Right ventricle myocardium inferior (tissue), 1 donor: ENCODE measurements at regions of chr12 and their contacts with region 1.

Region 1: GRCh38 chr12:57520053-57520871 is at the start of gene DDIT3:
- DNase-seq: peak; percentile 100
- ATAC-seq: peak; percentile 88
- total RNA-seq, gene DDIT3: 19.2 TPM

Region 2: GRCh38 chr12:57276935-57277563 is 243.2 kb before region 1 on chr12:
- intact Hi-C with region 1: no loop called
- DNase-seq: no peak
- ATAC-seq: no peak

Region 3: GRCh38 chr12:57462251-57462911 is 57.9 kb before region 1 on chr12:
- intact Hi-C with region 1: loop called (anchors 1 kb)
- DNase-seq: peak; percentile 90
- ATAC-seq: peak; percentile 76

Region 4: DNA sequence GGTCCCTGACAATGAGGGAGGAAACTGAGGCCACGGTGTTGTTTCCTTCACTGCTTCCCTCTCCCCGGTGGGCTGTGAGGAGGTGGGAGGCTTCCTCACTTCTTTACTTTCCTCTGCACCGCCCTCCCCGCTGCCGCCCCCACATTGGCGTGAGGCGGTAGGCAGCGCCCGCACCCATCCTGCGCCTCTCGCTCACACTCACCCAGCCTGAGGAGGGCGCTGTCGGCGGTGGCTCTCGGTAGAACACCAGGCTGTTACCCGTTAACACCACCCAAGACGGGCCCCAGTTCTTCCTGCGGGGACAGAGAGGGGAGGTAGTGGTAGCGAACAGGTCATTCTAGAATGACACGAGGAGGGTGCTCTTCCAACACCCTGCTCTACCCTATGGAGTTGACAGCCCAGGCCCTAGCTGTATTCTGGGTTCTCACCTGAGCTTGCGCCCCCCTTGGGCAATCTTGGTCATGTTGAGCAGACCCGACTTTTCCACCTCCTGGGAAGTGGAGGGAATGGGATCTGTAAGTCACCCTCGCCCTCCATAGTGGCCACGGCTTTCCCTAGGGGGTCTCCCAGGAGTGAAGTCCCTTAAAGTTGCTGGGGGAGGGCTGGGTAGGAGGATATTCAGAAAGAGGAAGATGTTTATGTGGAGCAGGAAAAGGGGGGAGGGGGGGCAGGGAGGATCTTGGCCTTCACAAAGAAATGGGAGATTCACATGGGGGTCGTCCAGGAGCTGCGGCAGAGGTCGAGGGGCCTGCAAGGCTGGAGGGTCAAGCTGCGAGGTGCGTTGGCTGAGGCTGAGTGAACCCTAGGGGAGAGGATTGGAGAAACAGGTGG is 43.9 kb before region 1 on chr12:
- intact Hi-C with region 1: no loop called
- DNase-seq: peak; percentile 85
- ATAC-seq: peak; percentile 12

Region 5: GRCh38 chr12:57487597-57488401 is 32.5 kb before region 1 on chr12 and contains the start of gene MARS1:
- intact Hi-C with region 1: loop called (anchors 2 kb)
- DNase-seq: peak; percentile 98
- ATAC-seq: peak; percentile 98
- total RNA-seq, gene MARS1: 89.7 TPM

Region 6: GRCh38 chr12:57546438-57547383 is 26.4 kb after region 1 on chr12 and contains the start of gene DCTN2:
- intact Hi-C with region 1: loop called (anchors 2 kb)
- DNase-seq: peak; percentile 95
- ATAC-seq: peak; percentile 99
- total RNA-seq, gene DCTN2: 92.5 TPM

Region 7: GRCh38 chr12:57611108-57611809 is 91.0 kb after region 1 on chr12 and contains the start of gene ARHGEF25:
- intact Hi-C with region 1: loop called (anchors 5 kb)
- DNase-seq: peak; percentile 87
- ATAC-seq: peak; percentile 91
- total RNA-seq, gene ARHGEF25: 13.0 TPM